ENCODE measurements at regions of chr1 and their contacts with region 1.

Region 1: GRCh38 chr1:245874942-245875580 is 632.0 kb downstream of the SMYD3 start:
- DNase-seq: peak; percentile 12 to 64 (median 47)
- H3K4me3 ChIP-seq: peak overlapping the region in 3 of 7 experiments; percentile 8 to 42 (median 36)
- H3K27ac ChIP-seq: no peak overlapping the region
- H3K4me1 ChIP-seq: peaks cover 0 to 13% (median 2%) of the 10 kb centered on the region in 4 experiments
- H3K27me3 ChIP-seq: no peaks in the 10 kb centered on the region

Region 2: GRCh38 chr1:245797592-245798348 is 77.3 kb before region 1 on chr1:
- CTCF ChIA-PET with region 1: no interaction called
- POLR2A ChIA-PET with region 1: no interaction called
- DNase-seq: peak in 2 of 3 donors; percentile 17 to 18
- H3K4me3 ChIP-seq: no peak overlapping the region
- H3K27ac ChIP-seq: no peak overlapping the region
- H3K4me1 ChIP-seq: no peaks in the 10 kb centered on the region
- H3K27me3 ChIP-seq: no peaks in the 10 kb centered on the region

Region 3: DNA sequence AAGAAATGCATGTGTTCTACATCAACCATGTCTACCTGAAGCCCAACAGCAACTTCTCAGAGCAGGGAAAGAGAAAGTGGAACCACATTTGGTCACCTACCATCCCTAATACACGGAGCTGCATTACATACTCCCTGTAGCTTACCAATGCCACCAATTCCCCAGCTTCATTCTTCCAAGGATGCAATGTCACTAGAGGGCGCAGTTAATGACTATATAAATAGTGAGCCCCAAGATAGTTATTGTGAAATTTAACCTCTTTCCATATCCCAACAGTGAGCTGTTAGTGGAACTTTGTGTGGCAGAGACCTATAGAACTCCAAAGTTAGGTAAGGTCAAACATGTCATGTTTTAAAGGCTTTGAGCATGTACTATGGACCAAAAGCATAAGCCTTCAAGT is 13.7 kb after region 1 on chr1:
- CTCF ChIA-PET with region 1: interaction called, 11 read pairs
- POLR2A ChIA-PET with region 1: no interaction called
- DNase-seq: peak; percentile 46 to 66 (median 61)
- H3K4me3 ChIP-seq: no peak overlapping the region
- H3K27ac ChIP-seq: no peak overlapping the region
- H3K4me1 ChIP-seq: no peaks in the 10 kb centered on the region
- H3K27me3 ChIP-seq: no peaks in the 10 kb centered on the region

Region 4: DNA sequence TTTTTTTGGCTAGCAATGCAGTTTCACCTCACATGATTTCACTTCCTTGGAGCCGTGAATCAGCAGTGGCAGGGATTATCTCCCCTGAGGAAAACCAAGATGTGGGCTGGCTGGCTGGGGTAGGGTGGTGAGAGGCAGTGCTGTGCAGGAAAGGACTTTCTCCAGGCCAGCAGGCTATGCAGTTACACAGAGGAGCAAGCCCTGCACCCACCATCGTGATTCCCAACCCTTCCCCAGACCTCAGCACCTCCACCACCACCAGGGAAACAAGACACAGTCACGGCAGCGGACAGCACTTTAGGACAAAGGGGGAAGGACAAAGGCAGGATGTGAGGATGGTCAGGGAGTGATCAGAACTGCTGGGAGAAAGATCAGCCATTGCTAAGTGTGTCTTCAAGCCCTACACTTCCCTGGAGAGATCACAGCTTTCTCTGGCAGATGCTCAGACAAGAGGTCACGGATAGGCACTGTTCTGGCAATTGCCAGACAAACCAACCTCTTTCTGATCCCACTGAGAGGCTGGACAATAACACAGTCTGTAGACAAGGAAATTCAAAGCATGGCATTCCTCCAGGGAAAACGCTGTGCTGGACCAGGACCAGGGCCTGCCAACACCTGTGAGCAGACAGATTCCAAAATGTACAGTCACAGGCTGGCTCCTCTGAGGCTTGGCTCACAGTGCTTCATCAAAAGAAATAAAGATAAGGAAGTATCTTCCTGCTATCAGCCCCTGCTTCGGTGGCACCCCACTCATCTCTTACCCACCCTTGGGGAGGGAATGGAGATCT is 122.6 kb after region 1 on chr1:
- CTCF ChIA-PET with region 1: no interaction called
- POLR2A ChIA-PET with region 1: no interaction called
- DNase-seq: no peak
- H3K4me3 ChIP-seq: no peak overlapping the region
- H3K27ac ChIP-seq: no peak overlapping the region
- H3K4me1 ChIP-seq: peaks cover 0 to 5% (median 3%) of the 10 kb centered on the region in 4 experiments
- H3K27me3 ChIP-seq: no peaks in the 10 kb centered on the region

Region 5: GRCh38 chr1:246018146-246018545 is 143.1 kb after region 1 on chr1:
- CTCF ChIA-PET with region 1: no interaction called
- POLR2A ChIA-PET with region 1: no interaction called
- DNase-seq: no peak
- H3K4me3 ChIP-seq: no peak overlapping the region
- H3K27ac ChIP-seq: no peak overlapping the region
- H3K4me1 ChIP-seq: peaks cover 4 to 23% (median 10%) of the 10 kb centered on the region in 4 experiments
- H3K27me3 ChIP-seq: no peaks in the 10 kb centered on the region